Panc1 (cell line): ENCODE measurements at regions of chr4 and their contacts with region 1.

Region 1: GRCh38 chr4:127810551-127810950 is 28.4 kb downstream of the HSPA4L start:
- DNase-seq: no peak
- ATAC-seq: no peak
- H3K4me3 ChIP-seq: no peak overlapping the region
- H3K27ac ChIP-seq: no peak overlapping the region
- H3K4me1 ChIP-seq: no peaks in the 10 kb centered on the region
- H3K27me3 ChIP-seq: no peaks in the 10 kb centered on the region
- CTCF ChIP-seq: no peak

Region 2: DNA sequence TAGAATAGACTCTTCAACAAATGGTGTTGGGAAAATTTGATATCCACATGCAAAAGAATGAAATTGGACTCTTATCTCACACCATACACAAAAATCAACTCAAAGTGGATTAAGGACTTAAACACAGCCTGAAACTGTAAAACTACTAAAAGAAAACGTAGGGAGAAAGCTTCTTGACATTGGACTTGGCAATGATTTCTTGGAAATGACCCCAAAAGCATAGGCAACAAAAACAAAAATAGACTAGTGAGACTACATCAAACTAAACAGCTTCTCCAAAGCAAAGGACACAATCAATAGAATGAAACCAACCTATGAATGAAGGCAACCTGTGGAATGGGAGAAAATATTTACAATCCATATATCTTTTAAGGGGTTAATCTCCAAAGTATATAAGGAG is 272.5 kb before region 1 on chr4:
- CTCF ChIA-PET with region 1: interaction called, 12 read pairs
- POLR2A ChIA-PET with region 1: no interaction called
- in situ Hi-C with region 1: no loop called
- intact Hi-C with region 1: no loop called
- DNase-seq: no peak
- ATAC-seq: no peak
- H3K4me3 ChIP-seq: no peak overlapping the region
- H3K27ac ChIP-seq: no peak overlapping the region
- H3K4me1 ChIP-seq: no peaks in the 10 kb centered on the region
- H3K27me3 ChIP-seq: no peaks in the 10 kb centered on the region
- CTCF ChIP-seq: no peak

Region 3: GRCh38 chr4:127606823-127607222 is 203.7 kb before region 1 on chr4:
- CTCF ChIA-PET with region 1: no interaction called
- POLR2A ChIA-PET with region 1: no interaction called
- in situ Hi-C with region 1: no loop called
- intact Hi-C with region 1: no loop called
- DNase-seq: no peak
- ATAC-seq: no peak
- H3K4me3 ChIP-seq: no peak overlapping the region
- H3K27ac ChIP-seq: no peak overlapping the region
- H3K4me1 ChIP-seq: no peaks in the 10 kb centered on the region
- H3K27me3 ChIP-seq: no peaks in the 10 kb centered on the region; the same call in 1 of the 2 replicates
- CTCF ChIP-seq: no peak